ENCODE measurements at regions of chr9 and their contacts with region 1.

Region 1: DNA sequence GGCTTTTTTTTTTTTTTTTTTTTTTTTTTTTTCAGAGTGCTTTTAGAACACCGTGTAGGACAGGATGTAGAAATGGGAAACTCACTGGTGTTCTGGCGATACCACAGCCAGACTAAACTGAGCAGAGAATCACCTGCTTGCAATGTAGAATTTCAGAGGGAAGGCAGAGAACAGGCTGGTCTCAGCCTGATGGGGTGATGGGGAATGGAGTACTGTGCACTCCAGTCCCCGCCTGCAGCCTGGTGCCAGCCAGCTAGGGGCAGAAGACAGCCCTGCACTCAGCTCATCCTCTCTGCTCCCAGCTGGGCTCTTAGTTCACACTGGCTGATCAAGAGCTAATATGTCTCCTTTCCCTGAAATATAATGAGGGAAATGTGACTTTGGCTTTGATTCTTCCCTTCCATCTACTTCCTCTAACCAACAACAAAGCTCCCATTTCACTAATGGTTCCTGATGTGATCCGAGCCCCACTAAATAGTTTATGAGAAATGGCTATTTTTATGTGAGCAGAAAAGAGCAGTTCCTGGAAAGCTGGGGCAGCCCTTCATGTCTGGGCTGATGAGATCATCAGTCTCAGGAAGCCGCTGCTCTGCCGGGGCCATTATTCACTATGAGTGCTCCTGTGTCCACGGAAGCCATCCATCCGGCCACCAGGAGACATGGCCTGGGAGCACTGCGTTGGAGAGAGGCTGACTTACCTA is 209.7 kb downstream of the GADD45G start:
- DNase-seq: no peak
- H3K4me3 ChIP-seq: no peak overlapping the region
- H3K27ac ChIP-seq: no peak overlapping the region
- H3K4me1 ChIP-seq: no peaks in the 10 kb centered on the region
- H3K27me3 ChIP-seq: peaks cover 2% of the 10 kb centered on the region
- CTCF ChIP-seq: no peak

Region 2: GRCh38 chr9:89755821-89756220 is 58.7 kb before region 1 on chr9:
- CTCF ChIA-PET with region 1: no interaction called
- dilution Hi-C with region 1: loop called (anchors 5 kb)
- in situ Hi-C with region 1: no loop called
- intact Hi-C with region 1: no loop called
- DNase-seq: peak; percentile 35
- H3K4me3 ChIP-seq: no peak overlapping the region
- H3K27ac ChIP-seq: no peak overlapping the region
- H3K4me1 ChIP-seq: no peaks in the 10 kb centered on the region
- H3K27me3 ChIP-seq: no peaks in the 10 kb centered on the region
- CTCF ChIP-seq: no peak

Region 3: DNA sequence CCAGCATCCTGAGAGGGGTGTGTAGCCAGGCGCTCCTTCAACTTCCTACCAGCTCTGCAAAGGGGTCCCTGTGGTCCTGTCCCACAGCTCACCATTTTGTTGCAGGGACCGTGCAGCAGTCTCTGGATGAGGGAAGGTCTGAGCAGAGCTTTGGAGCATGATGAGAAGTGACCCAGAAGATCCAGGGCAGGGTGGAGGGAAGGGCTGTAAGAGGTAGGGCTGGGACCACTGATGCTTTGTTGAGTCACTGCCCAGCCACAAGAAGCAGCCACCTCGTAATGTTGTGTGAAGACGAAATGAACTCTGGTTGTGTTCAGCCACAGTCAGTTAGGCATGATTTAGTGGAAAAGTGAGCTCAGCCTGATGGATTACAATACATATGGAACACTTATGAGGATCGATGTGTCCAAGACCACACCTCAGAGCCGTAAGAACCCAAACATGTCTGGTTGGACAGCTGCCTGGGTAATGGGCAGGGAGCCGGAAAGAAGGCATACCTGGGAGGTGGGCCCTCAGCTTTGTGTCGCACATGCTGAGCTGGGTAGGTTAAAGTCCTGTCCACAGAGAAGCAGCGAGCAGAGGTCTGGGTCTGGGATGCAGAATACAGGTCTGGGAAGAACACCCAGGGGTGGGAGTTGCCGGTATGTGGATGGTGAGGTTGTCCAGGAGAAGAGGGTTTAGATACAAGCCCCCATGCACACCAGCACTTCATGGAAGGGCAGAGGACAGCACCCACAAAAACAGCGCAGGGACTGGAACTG is 40.4 kb after region 1 on chr9:
- CTCF ChIA-PET with region 1: no interaction called
- dilution Hi-C with region 1: no loop called
- in situ Hi-C with region 1: no loop called
- intact Hi-C with region 1: no loop called
- DNase-seq: no peak
- H3K4me3 ChIP-seq: no peak overlapping the region
- H3K27ac ChIP-seq: no peak overlapping the region
- H3K4me1 ChIP-seq: no peaks in the 10 kb centered on the region
- H3K27me3 ChIP-seq: no peaks in the 10 kb centered on the region
- CTCF ChIP-seq: no peak

Region 4: GRCh38 chr9:89902450-89903145 is 88.1 kb after region 1 on chr9:
- CTCF ChIA-PET with region 1: no interaction called
- dilution Hi-C with region 1: no loop called
- in situ Hi-C with region 1: no loop called
- intact Hi-C with region 1: no loop called
- DNase-seq: no peak
- H3K4me3 ChIP-seq: no peak overlapping the region
- H3K27ac ChIP-seq: no peak overlapping the region
- H3K4me1 ChIP-seq: no peaks in the 10 kb centered on the region
- H3K27me3 ChIP-seq: peaks cover 3% of the 10 kb centered on the region
- CTCF ChIP-seq: no peak